GM10248 (cell line): ENCODE measurements at regions of chr17 and their contacts with region 1.

Region 1: DNA sequence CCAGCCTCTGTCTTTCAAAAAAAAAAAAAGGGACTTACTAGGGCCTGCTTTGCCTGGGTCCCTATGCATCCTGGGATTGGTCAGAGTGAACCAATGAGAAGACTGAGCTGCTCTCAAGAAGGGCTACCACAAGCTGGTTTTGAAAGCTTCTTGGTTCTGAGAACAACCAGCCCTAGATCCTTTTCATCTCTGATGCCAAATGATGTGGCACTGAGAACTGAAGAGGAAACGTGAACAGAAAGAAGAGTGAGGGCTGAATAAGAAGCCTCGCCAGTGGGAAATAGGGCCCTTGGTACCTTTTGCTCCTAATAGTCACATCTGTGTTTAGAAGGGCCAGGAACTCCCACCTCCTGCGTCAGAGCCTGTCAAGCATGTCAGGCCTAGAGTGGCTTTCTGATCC is 10.7 kb downstream of the TACO1 start:
- DNase-seq: no peak
- CTCF ChIP-seq: no peak

Region 2: GRCh38 chr17:63419949-63420867 is 191.1 kb before region 1 on chr17:
- CTCF ChIA-PET with region 1: interaction called, 120 read pairs
- POLR2A ChIA-PET with region 1: no interaction called
- DNase-seq: no peak
- CTCF ChIP-seq: no peak

Region 3: DNA sequence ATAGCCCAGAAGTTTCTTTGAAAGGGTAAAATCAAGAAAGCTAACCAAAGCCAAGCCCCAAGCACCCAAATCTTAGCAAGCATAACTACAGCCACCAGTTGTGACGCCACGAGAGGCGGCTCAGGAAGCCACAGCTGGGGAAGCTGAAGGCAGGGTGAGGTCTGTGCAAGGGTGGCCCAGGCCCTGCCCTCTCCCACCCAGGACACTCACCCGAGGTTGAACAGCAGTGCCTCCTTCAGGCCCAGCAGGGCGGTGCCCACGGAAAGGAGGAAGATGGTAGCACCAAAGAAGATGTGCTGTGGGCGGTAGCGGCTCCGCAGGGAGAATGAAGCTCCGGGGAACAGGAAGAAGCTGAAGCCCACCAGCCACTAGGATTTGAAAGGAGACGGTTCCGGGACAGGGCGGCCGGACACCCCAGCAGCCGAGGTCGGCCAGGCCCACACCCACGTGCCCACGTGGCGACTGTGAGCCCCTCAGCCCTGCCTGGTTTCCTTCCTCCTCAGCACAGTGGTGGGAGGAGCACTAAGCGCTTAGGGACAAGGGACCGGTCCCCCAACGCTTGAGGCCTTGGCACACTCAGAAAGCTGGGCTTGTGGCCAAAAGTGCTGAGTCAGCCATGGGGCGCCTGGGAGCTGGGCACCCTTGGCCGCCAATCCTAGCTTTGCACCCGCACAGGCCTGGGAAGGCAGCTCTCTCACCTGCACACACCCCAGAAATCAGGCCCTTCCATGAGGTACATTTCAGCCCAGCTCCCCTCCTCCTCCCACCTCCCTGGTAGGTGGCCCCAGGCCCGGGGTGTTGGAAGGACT is 176.3 kb before region 1 on chr17:
- CTCF ChIA-PET with region 1: interaction called, 41 read pairs
- POLR2A ChIA-PET with region 1: no interaction called
- DNase-seq: no peak
- CTCF ChIP-seq: no peak

Region 4: DNA sequence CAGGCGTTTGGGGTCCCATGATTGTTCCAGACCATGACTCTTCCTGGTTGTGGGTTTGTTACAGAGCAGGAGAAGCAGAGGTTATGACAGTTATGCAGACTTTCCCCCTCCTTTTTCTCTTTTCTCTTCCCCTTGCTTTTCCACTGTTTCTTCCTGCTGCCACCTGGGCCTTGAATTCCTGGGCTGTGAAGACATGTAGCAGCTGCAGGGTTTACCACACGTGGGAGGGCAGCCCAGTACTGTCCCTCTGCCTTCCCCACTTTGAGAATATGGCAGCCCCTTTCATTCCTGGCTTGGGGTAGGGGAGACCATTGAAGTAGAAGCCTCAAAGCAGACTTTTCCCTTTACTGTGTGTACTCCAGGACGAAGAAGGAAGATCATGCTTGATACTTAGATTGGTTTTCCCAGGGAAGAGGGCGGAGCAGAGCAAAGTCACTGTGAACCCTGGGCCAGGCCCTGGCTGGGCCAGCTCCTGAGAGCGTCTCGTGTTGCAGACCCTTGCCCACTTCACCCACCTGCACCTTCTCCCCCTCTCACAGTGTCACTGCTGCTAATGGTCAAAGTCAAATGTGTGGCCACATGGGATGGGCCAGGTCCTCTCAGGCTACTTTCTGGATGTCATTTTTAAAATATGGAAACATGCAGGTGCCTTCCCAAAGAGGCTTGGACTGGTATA is 18.4 kb before region 1 on chr17:
- CTCF ChIA-PET with region 1: interaction called, 11 read pairs
- POLR2A ChIA-PET with region 1: no interaction called
- DNase-seq: no peak
- CTCF ChIP-seq: no peak

Region 5: GRCh38 chr17:63621766-63622519 is 10.6 kb after region 1 on chr17 and contains the start of gene MAP3K3:
- CTCF ChIA-PET with region 1: interaction called, 29 read pairs
- POLR2A ChIA-PET with region 1: interaction called, 5 read pairs
- DNase-seq: peak; percentile 99
- CTCF ChIP-seq: peak; percentile 8